ENCODE measurements at regions of chr15 and their contacts with region 1.

Region 1: DNA sequence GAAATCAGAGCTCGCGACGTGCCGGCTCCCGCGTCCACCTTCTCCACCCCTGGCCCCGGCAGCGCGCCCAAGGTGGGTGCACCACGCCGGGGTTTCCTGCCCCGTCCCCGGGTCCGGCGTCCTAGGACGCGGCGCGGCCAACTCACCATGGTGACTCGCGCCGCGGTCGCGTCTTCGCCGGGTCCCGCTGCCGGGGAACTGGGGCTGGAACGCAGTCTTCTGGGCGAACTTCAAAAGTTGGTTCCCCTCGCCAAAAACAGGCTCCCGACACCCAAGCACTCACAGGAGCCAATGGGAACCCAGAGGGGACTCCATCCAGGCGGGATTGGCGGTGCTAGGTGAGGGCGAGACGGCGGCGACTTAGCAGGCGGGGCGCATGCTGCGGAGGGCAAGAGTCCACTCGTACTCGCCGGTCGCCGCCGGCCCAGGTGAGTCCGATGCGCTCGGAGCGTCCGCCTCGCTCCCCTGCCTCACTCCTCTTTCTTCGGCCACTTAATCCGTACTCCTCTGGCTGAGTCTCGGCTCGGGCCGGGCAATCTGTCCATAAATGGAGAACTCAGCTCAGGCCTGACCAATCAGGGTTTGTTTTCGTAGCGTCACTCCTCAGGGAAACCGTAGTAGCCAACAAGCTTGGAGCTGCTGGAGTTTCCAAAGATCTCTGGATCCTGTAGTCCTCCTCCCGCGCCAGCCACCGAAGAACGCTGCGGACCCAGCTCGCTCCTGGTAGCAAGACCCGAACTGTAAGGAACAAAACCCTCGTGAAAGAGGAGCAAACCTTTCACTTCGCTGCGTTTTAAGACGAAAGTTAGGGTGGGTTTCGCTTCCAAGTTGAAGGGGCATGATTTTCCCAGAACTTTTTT is at the start of gene MYO1E:
- DNase-seq: peak; percentile 91
- ATAC-seq: peak; percentile 95
- H3K4me3 Mint-ChIP-seq: peak within 1 kb of the TSS; percentile 91
- H3K27ac Mint-ChIP-seq: peak within 1 kb of the TSS; percentile 96
- H3K4me1 Mint-ChIP-seq: peaks cover 26% of the 10 kb centered on the region
- H3K27me3 Mint-ChIP-seq: peaks cover 26% of the 10 kb centered on the region
- CTCF ChIP-seq: no peak
- total RNA-seq, gene MYO1E: 83.6 to 104 TPM (median 99.9 TPM) in 3 replicates

Region 2: DNA sequence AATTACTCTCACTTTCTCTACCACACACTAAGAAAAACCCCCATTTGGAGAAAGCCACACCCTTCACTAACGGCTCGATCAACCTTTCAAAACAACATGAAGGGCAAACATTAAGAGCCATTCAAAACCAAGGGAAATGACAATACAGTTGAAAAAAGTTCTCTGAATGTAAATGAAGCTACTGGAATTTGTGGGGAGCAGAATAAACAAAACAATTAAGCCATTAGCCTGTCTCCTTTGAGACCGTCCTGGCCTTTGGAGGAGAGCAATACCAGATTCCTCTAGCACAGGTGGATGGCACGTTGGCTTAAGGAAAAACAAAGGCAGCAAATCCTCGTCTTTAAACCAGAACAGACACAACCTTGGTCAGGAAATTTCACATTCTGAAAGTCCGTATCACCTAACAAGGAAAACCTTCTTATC is 18.6 kb before region 1 on chr15:
- CTCF ChIA-PET with region 1: interaction called, 3 read pairs
- POLR2A ChIA-PET with region 1: interaction called, 34 read pairs
- DNase-seq: peak; percentile 31
- ATAC-seq: peak; percentile 84
- H3K4me3 Mint-ChIP-seq: peak overlapping the region; percentile 65
- H3K27ac Mint-ChIP-seq: peak overlapping the region; percentile 99
- H3K4me1 Mint-ChIP-seq: peaks cover 76% of the 10 kb centered on the region
- H3K27me3 Mint-ChIP-seq: peaks cover 60% of the 10 kb centered on the region
- CTCF ChIP-seq: no peak

Region 3: GRCh38 chr15:59360305-59360704 is 12.3 kb before region 1 on chr15:
- CTCF ChIA-PET with region 1: interaction called, 7 read pairs
- POLR2A ChIA-PET with region 1: interaction called, 34 read pairs
- DNase-seq: peak; percentile 25
- ATAC-seq: peak; percentile 76
- H3K4me3 Mint-ChIP-seq: no peak overlapping the region
- H3K27ac Mint-ChIP-seq: no peak overlapping the region
- H3K4me1 Mint-ChIP-seq: peaks cover 30% of the 10 kb centered on the region
- H3K27me3 Mint-ChIP-seq: peaks cover 23% of the 10 kb centered on the region
- CTCF ChIP-seq: no peak

Region 4: GRCh38 chr15:59562448-59563186 is 190.0 kb after region 1 on chr15:
- CTCF ChIA-PET with region 1: no interaction called
- POLR2A ChIA-PET with region 1: no interaction called
- DNase-seq: no peak
- ATAC-seq: no peak
- H3K4me3 Mint-ChIP-seq: no peak overlapping the region
- H3K27ac Mint-ChIP-seq: no peak overlapping the region
- H3K4me1 Mint-ChIP-seq: peaks cover 9% of the 10 kb centered on the region
- H3K27me3 Mint-ChIP-seq: peaks cover 2% of the 10 kb centered on the region; the same call in 1 of the 2 replicates
- CTCF ChIP-seq: no peak